T-cell (primary cell): ENCODE measurements at regions of chr15 and their contacts with region 1.

Region 1: DNA sequence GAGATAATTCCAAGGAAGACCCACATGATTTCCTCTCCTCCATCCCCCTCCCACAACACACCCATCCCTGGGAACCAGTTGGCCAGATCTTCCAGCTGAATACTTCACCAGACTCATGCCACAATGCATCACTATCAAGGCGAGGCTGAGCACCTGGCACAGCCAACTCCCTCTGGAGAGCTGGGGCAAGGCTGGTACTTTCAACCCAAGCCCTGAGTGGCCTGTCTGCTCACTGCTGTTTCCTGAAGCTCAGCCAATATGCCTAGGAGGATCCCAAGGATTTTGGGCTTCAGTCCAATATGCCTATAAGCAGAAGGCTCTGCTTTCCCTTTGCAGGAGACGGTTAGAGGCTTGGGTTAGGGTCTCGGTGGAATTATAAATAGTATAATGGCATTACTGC is 90.9 kb upstream of the NEO1 start:
- DNase-seq: no peak
- ATAC-seq: no peak
- H3K4me3 ChIP-seq: no peak overlapping the region
- H3K4me3 Mint-ChIP-seq: no peak overlapping the region
- H3K27ac ChIP-seq: no peak overlapping the region
- H3K27ac Mint-ChIP-seq: peak overlapping the region in 1 of 2 donors; percentile 21
- H3K4me1 ChIP-seq: peaks cover 0 to 29% of the 10 kb centered on the region in 2 experiments
- H3K4me1 Mint-ChIP-seq: peaks cover 0 to 25% (median 10%) of the 10 kb centered on the region in 3 donors
- H3K27me3 ChIP-seq: peaks cover 0 to 3% of the 10 kb centered on the region in 2 experiments
- H3K27me3 Mint-ChIP-seq: peaks cover 15 to 39% of the 10 kb centered on the region in 2 donors

Region 2: DNA sequence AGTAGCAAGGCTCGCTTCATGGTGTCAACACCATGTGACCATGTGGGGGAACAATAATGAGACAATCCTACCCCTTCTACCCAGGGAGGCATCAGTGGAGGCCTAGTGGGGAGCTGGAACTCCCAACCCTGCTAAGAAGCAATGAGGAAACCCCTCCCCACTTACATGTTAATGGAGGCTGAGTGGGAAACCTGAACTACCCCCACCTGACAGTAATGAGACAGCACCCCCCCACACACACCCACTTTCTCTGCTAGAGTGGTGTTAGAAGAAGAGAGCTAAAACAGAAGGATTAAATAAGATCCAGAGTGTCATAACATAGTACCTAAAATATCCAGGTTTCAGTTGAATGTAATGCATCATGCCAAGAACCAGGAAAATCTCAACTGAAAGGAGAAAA is 169.5 kb after region 1 on chr15:
- CTCF ChIA-PET with region 1: no interaction called
- POLR2A ChIA-PET with region 1: interaction called in 1 of 2 experiments, 10 read pairs
- DNase-seq: no peak
- ATAC-seq: no peak
- H3K4me3 ChIP-seq: no peak overlapping the region
- H3K4me3 Mint-ChIP-seq: no peak overlapping the region
- H3K27ac ChIP-seq: no peak overlapping the region
- H3K27ac Mint-ChIP-seq: no peak overlapping the region
- H3K4me1 ChIP-seq: no peaks in the 10 kb centered on the region
- H3K4me1 Mint-ChIP-seq: peaks cover 0 to 2% (median 0%) of the 10 kb centered on the region in 3 donors
- H3K27me3 ChIP-seq: no peaks in the 10 kb centered on the region
- H3K27me3 Mint-ChIP-seq: peaks cover 0 to 3% of the 10 kb centered on the region in 2 donors